Right ventricle myocardium inferior (tissue), 1 donor: ENCODE measurements at regions of chr17 and their contacts with region 1.

Region 1: DNA sequence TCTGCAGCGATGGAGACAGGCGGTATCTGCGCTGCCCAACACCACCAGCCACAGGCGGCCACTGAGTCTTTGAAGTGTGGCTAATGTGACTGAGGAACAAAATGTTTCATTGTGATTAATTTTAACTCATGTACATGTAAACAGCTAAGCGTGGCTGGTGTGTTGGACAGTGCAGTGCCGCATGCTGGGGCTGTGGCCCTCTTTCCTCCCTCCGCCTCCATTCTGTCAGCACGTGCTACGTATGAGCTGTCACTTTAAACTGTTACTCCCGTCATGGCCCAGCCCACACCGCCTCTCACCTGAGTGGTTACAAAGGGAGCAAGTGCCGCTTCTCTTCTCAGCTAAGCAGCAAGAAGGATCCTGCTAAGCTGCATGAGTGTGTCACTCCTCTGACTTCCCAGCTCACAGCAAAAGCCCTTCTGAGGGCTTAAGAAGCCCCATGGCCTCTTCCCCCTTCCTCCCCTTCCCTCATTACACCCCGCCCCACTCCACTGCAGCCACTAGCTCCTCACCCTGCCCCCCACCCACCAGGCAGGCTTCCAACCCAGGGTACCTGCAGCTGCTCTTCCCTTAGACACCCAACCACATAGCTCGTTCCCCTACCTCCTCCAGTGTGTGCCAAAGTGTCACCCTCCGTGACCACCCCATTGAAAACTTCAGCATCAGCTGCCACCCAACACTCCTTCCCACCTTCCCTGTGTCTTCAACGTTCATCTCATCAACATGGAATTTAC is 15.0 kb downstream of the HASPIN start:
- DNase-seq: no peak
- ATAC-seq: peak; percentile 62

Region 2: DNA sequence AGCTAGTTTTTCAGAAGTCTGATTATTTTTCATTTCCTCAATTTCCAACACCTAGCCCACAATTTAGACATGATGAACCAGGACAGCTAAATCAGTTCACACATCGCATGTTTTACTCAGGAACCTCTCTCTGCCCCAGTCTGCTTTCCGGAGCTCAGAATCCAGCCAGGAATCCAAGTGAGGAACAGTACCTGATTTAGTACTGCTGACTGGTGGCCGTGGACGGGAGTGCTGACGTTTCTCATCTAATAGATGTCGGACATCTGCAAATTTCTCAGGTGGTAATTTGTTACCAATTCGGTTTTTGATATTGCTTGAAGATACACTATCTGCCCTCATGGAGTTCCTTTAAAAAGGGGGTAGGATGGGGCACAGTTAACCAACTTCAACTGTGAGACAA is 77.2 kb after region 1 on chr17:
- intact Hi-C with region 1: no loop called
- DNase-seq: no peak
- ATAC-seq: no peak

Region 3: GRCh38 chr17:3827124-3827773 is 88.5 kb after region 1 on chr17:
- intact Hi-C with region 1: loop called (anchors 5 kb)
- DNase-seq: no peak
- ATAC-seq: no peak

Region 4: GRCh38 chr17:3845621-3846441 is 107.1 kb after region 1 on chr17 and contains the start of gene NCBP3:
- intact Hi-C with region 1: loop called (anchors 5 kb)
- DNase-seq: peak; percentile 97
- ATAC-seq: peak; percentile 99
- total RNA-seq, gene NCBP3: 15.3 TPM

Region 5: GRCh38 chr17:3913531-3914311 is 175.0 kb after region 1 on chr17:
- intact Hi-C with region 1: loop called (anchors 2 kb)
- DNase-seq: peak; percentile 92
- ATAC-seq: peak; percentile 72

Region 6: DNA sequence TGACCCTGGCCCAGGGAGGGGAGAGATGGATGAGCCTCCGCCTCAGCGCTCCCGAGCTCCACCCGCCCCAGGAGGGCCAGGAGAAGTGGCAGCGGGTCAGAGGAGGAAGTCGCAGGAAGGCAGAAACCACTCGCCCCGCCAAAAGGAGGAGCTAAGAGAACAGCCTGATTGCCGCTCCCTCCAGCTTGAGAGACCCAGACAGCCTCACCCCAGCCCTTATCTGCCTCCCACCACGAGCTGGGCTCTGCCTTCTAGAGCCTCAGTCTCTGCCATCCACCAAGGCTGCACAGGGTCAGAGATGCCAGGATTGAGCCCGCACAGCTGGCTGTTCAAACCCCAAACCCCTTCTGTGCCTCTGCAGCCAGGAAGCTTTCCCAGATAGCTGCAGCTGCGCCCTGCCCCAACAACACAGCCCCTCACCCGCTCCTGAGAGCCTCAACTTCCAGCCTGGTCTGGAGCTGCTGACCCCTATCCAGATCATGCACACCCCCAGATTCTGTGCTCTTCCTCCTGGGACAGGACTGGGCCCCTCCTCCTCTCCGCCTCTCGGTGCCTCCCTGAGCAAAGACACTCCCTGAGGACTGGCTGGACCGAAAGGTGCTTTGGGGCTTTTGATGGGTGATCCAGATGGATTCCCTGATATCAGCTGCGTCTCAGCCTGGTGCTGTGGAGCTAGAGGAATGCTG is 226.5 kb after region 1 on chr17:
- intact Hi-C with region 1: no loop called
- DNase-seq: peak; percentile 85
- ATAC-seq: peak; percentile 68

Region 7: GRCh38 chr17:4074831-4075495 is 336.2 kb after region 1 on chr17:
- intact Hi-C with region 1: loop called (anchors 10 kb)
- DNase-seq: no peak
- ATAC-seq: peak; percentile 31